ENCODE measurements at regions of chr11 and their contacts with region 1.

Region 1: DNA sequence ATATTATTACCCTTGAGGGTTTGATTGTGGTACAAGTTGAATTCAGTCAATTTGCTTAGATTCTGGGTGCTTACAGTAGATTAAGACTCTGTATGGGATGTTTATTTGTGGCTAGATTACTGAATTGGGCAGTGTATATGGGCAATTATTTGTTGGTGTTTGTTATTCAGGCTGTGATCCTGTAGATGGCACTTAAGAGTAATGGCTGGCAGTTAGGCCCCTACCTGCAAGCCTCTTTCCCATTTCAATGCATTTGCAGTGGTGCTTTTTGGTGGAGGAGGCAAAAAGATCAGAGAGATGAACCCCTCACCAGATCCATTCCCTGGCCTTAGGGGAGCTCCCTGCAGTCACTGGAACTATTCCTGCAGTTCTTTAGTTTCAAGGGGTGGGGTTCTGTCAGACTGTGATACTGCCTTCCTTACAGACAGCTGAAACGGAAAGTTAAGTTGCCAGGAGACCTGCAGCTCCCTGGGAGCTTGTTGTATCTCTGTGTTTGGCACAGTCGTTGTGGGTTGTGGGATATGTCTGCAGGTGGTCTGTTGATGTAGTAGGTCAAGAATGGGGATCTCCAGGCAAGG is 199.5 kb downstream of the AASDHPPT start:
- DNase-seq: peak; percentile 29
- H3K4me3 Mint-ChIP-seq: no peak overlapping the region
- H3K27ac Mint-ChIP-seq: no peak overlapping the region
- H3K4me1 Mint-ChIP-seq: peaks cover 23% of the 10 kb centered on the region
- H3K27me3 Mint-ChIP-seq: no peaks in the 10 kb centered on the region
- CTCF ChIP-seq: peak; percentile 40

Region 2: GRCh38 chr11:106381901-106382300 is 105.0 kb after region 1 on chr11:
- CTCF ChIA-PET with region 1: no interaction called
- POLR2A ChIA-PET with region 1: no interaction called
- intact Hi-C with region 1: no loop called
- DNase-seq: peak; percentile 18
- H3K4me3 Mint-ChIP-seq: no peak overlapping the region
- H3K27ac Mint-ChIP-seq: no peak overlapping the region
- H3K4me1 Mint-ChIP-seq: peaks cover 6% of the 10 kb centered on the region
- H3K27me3 Mint-ChIP-seq: no peaks in the 10 kb centered on the region
- CTCF ChIP-seq: no peak

Region 3: GRCh38 chr11:106585061-106585460 is 308.1 kb after region 1 on chr11:
- CTCF ChIA-PET with region 1: interaction called, 8 read pairs
- POLR2A ChIA-PET with region 1: no interaction called
- intact Hi-C with region 1: loop called (anchors 1 kb)
- DNase-seq: peak; percentile 39
- H3K4me3 Mint-ChIP-seq: no peak overlapping the region
- H3K27ac Mint-ChIP-seq: no peak overlapping the region
- H3K4me1 Mint-ChIP-seq: no peaks in the 10 kb centered on the region
- H3K27me3 Mint-ChIP-seq: no peaks in the 10 kb centered on the region
- CTCF ChIP-seq: peak; percentile 23

Region 4: DNA sequence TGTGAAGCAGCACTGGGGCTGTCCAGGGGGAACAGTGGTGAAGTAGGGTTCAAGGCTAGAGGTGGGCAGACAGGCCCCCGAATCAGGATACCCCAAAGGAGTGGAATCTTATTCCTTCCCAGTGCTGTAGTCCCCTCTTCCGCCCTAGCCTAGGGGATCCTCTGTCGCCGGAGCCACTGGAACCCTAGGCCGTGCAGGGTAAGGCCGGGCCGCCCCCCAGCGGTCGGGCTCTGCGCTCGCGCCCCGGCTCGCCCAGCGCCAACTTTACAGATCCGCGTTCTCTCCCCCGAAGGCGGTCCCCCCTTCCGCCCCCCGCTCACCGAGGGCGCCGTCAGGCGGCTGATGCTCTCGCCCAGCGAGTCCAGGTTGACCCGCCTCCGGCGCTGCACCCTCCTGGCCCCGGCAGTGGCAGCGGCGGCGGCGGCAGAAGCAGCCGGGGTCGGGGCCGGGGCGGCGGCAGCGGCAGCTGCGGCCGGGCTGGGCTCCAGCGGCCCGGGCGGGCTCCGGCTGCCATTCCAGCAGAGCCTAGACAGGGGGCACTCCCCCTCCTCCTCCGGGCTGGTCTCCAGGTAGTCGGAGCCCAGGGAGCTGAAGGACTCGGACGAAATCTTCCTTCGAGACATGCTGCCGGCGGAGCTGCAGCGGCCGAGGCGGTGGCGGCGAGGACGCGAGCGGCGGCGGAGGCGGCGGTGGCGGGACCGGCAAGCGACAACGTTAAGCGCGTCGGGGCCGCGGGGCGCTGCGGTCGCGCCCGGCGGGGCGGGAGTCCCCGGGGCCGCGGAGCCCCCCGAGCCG is 740.7 kb after region 1 on chr11:
- CTCF ChIA-PET with region 1: no interaction called
- POLR2A ChIA-PET with region 1: no interaction called
- intact Hi-C with region 1: loop called (anchors 10 kb)
- DNase-seq: peak; percentile 44
- H3K4me3 Mint-ChIP-seq: peak overlapping the region; percentile 59
- H3K27ac Mint-ChIP-seq: no peak overlapping the region
- H3K4me1 Mint-ChIP-seq: peaks cover 4% of the 10 kb centered on the region
- H3K27me3 Mint-ChIP-seq: peaks cover 55% of the 10 kb centered on the region
- CTCF ChIP-seq: peak; percentile 40